Naive thymus-derived CD4-positive, alpha-beta T cell (primary cell): ENCODE measurements at regions of chr12 and their contacts with region 1.

Region 1: DNA sequence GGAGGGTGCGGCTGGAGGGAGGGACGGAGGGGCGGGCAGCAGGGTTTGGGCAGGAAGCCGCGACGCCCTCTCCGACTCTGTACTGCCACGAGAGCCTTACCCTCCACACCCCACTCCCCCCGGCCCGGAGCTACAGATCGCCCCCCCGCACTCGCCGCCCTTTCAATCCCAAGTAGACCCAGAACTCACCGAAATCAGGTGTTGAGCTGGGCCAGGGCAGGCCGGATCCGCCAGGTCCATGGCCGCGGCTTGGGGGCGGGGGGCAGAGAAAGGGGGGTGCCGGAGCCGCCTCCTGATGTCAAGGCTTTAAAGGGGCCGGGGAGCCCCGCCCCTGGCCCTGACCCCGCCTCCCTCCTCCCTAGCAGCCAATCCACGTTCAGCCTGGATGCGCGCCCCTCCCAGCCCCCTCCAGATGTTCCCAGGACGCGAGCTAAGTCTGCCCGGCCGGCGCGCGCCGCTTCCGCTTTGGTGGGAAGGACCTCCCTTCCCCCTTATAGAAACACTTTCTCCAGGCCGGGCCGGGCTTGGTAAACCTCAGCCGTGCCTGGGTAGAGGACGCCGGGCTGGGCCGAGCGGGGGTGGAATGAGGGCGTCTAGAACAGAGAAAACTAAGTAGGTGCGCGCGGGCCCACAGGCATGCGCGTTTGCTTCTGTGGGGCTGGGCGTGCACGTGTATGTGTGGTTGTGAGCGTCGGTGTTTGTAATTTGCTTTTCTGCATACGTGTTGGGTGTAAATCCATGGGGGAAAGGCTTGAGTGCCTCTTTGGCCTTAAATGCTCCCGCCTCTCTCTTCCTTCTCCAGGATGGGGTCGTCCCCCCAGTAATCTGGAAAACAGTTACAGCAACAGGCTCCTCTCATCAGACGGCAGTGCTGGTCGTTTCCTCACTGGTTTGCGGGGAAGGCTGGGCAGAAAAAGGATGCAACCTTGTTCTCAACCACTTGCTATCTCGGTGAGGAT is at the start of gene NCKAP5L:
- DNase-seq: peak; percentile 86 to 94 (median 93)
- ATAC-seq: peak; percentile 96
- H3K4me3 ChIP-seq: peak within 1 kb of the TSS; percentile 82
- H3K4me3 Mint-ChIP-seq: peak within 1 kb of the TSS; percentile 88 to 99 (median 96)
- H3K27ac ChIP-seq: peak within 1 kb of the TSS; percentile 79
- H3K27ac Mint-ChIP-seq: peak within 1 kb of the TSS; percentile 89 to 99 (median 95)
- H3K4me1 ChIP-seq: peaks cover 8 to 16% of the 10 kb centered on the region in 2 donors
- H3K4me1 Mint-ChIP-seq: peaks cover 7 to 42% (median 30%) of the 10 kb centered on the region in 7 donors
- H3K27me3 ChIP-seq: no peaks in the 10 kb centered on the region
- H3K27me3 Mint-ChIP-seq: peaks cover 0 to 13% (median 0%) of the 10 kb centered on the region in 5 donors
- total RNA-seq, gene NCKAP5L: 4.3 to 27.5 (median 12.0) TPM

Region 2: GRCh38 chr12:49264738-49265515 is 563.5 kb before region 1 on chr12 and contains the start of gene TUBA1C:
- CTCF ChIA-PET with region 1: no interaction called
- POLR2A ChIA-PET with region 1: no interaction called
- intact Hi-C with region 1: loop called in 1 of 2 experiments (anchors 10 kb)
- DNase-seq: peak; percentile 67 to 98 (median 72)
- ATAC-seq: peak; percentile 93
- H3K4me3 ChIP-seq: peak within 1 kb of the TSS; percentile 91
- H3K4me3 Mint-ChIP-seq: peak within 1 kb of the TSS; percentile 88 to 99 (median 92)
- H3K27ac ChIP-seq: peak within 1 kb of the TSS; percentile 68
- H3K27ac Mint-ChIP-seq: peak within 1 kb of the TSS; percentile 65 to 99 (median 89)
- H3K4me1 ChIP-seq: peaks cover 16% of the 10 kb centered on the region in 2 donors
- H3K4me1 Mint-ChIP-seq: peaks cover 4 to 51% (median 11%) of the 10 kb centered on the region in 7 donors
- H3K27me3 ChIP-seq: no peaks in the 10 kb centered on the region
- H3K27me3 Mint-ChIP-seq: peaks cover 0 to 2% (median 0%) of the 10 kb centered on the region in 5 donors
- total RNA-seq, gene TUBA1C: 17.9 to 195 (median 24.1) TPM

Region 3: DNA sequence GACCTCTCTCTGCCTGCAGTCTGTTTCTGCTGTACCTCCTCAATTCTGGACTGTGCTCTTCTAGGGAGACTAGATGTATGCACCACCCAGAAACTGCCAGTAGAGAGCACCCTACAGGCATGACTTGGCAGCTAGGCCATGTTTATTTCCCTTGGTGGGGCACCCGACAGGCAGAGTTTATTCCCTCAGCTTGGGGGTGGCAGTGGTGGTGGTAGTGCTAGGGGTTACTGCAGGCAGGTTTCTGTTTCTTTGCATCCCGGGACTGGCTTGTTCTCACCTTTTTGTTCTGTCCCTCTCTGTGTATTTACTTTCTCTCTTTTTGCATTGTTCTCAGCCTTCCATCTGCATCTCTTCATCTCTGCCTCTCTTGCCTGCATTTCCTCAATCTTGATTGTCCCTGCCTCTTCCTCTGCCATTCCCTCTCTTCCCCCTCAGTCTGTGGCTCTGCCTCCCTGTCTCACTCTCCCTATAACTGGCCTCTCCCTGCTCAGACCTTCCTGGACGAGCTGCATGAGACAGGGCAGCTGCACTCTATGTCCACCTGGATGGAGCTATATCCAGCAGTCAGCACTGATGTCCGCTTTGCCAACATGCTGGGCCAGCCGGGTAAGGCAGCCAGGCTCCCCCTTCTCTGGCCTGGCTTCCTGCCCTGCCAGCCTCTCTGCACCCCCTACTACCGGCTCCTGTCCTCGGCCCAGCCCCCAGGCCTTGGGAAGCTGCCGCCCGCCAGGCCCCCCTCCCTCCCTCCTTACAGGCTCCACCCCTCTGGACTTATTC is 191.2 kb before region 1 on chr12:
- CTCF ChIA-PET with region 1: no interaction called
- POLR2A ChIA-PET with region 1: no interaction called
- intact Hi-C with region 1: loop called in 1 of 2 experiments (anchors 5 kb)
- DNase-seq: peak in 8 of 9 donors; percentile 45 to 71 (median 61)
- ATAC-seq: peak; percentile 95
- H3K4me3 ChIP-seq: no peak overlapping the region
- H3K4me3 Mint-ChIP-seq: peak overlapping the region in 1 of 10 donors; percentile 20
- H3K27ac ChIP-seq: peak overlapping the region; percentile 38
- H3K27ac Mint-ChIP-seq: peak overlapping the region; percentile 13 to 90 (median 68)
- H3K4me1 ChIP-seq: peaks cover 6 to 11% of the 10 kb centered on the region in 2 donors
- H3K4me1 Mint-ChIP-seq: peaks cover 10 to 36% (median 26%) of the 10 kb centered on the region in 7 donors
- H3K27me3 ChIP-seq: no peaks in the 10 kb centered on the region
- H3K27me3 Mint-ChIP-seq: no peaks in the 10 kb centered on the region

Region 4: DNA sequence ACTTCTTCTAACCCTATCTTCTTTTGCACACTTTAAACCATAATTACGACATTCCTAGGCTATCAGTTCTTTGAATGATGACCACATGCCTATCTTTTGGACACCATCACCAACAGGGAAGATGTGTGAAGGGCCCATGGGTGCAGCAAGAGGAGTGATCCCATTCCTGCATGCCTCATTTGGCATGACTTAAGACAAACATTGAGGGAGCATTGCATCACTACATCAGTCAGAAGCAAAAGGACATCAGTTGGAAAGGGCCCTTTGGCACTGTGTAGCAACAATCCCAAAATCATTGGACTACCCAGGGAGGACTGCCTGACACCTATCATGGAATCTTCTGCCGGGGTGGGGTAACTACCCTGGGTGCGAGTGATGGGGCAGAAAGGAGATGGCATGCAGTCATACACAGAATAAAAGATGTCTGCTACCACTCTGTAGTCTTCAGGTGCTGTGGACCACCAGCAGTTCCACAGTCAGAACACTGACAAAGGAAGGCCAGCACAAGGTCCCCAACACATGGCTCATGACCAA is 97.8 kb before region 1 on chr12:
- CTCF ChIA-PET with region 1: no interaction called
- POLR2A ChIA-PET with region 1: no interaction called
- intact Hi-C with region 1: no loop called
- DNase-seq: no peak
- ATAC-seq: no peak
- H3K4me3 ChIP-seq: no peak overlapping the region
- H3K4me3 Mint-ChIP-seq: no peak overlapping the region
- H3K27ac ChIP-seq: no peak overlapping the region
- H3K27ac Mint-ChIP-seq: no peak overlapping the region
- H3K4me1 ChIP-seq: no peaks in the 10 kb centered on the region
- H3K4me1 Mint-ChIP-seq: peaks cover 0 to 2% (median 0%) of the 10 kb centered on the region in 7 donors
- H3K27me3 ChIP-seq: no peaks in the 10 kb centered on the region
- H3K27me3 Mint-ChIP-seq: peaks cover 0 to 26% (median 3%) of the 10 kb centered on the region in 5 donors

Region 5: GRCh38 chr12:49750027-49750995 is 78.1 kb before region 1 on chr12:
- CTCF ChIA-PET with region 1: no interaction called
- POLR2A ChIA-PET with region 1: interaction called, 4 read pairs
- intact Hi-C with region 1: loop called in 1 of 2 experiments (anchors 2 kb)
- DNase-seq: peak in 5 of 9 donors; percentile 10 to 59 (median 36)
- ATAC-seq: peak; percentile 76
- H3K4me3 ChIP-seq: peak overlapping the region; percentile 2
- H3K4me3 Mint-ChIP-seq: peak overlapping the region; percentile 39 to 95 (median 66)
- H3K27ac ChIP-seq: peak overlapping the region; percentile 46
- H3K27ac Mint-ChIP-seq: peak overlapping the region; percentile 26 to 89 (median 76)
- H3K4me1 ChIP-seq: peaks cover 50 to 56% of the 10 kb centered on the region in 2 donors
- H3K4me1 Mint-ChIP-seq: peaks cover 43 to 89% (median 77%) of the 10 kb centered on the region in 7 donors
- H3K27me3 ChIP-seq: no peaks in the 10 kb centered on the region
- H3K27me3 Mint-ChIP-seq: no peaks in the 10 kb centered on the region

Region 6: GRCh38 chr12:50041062-50041860 is 212.8 kb after region 1 on chr12:
- CTCF ChIA-PET with region 1: no interaction called
- POLR2A ChIA-PET with region 1: no interaction called
- intact Hi-C with region 1: no loop called
- DNase-seq: no peak
- ATAC-seq: no peak
- H3K4me3 ChIP-seq: no peak overlapping the region
- H3K4me3 Mint-ChIP-seq: no peak overlapping the region
- H3K27ac ChIP-seq: no peak overlapping the region
- H3K27ac Mint-ChIP-seq: peak overlapping the region in 1 of 9 donors; percentile 6
- H3K4me1 ChIP-seq: no peaks in the 10 kb centered on the region
- H3K4me1 Mint-ChIP-seq: peaks cover 0 to 15% (median 0%) of the 10 kb centered on the region in 7 donors
- H3K27me3 ChIP-seq: no peaks in the 10 kb centered on the region
- H3K27me3 Mint-ChIP-seq: peaks cover 0 to 10% (median 4%) of the 10 kb centered on the region in 5 donors

Region 7: DNA sequence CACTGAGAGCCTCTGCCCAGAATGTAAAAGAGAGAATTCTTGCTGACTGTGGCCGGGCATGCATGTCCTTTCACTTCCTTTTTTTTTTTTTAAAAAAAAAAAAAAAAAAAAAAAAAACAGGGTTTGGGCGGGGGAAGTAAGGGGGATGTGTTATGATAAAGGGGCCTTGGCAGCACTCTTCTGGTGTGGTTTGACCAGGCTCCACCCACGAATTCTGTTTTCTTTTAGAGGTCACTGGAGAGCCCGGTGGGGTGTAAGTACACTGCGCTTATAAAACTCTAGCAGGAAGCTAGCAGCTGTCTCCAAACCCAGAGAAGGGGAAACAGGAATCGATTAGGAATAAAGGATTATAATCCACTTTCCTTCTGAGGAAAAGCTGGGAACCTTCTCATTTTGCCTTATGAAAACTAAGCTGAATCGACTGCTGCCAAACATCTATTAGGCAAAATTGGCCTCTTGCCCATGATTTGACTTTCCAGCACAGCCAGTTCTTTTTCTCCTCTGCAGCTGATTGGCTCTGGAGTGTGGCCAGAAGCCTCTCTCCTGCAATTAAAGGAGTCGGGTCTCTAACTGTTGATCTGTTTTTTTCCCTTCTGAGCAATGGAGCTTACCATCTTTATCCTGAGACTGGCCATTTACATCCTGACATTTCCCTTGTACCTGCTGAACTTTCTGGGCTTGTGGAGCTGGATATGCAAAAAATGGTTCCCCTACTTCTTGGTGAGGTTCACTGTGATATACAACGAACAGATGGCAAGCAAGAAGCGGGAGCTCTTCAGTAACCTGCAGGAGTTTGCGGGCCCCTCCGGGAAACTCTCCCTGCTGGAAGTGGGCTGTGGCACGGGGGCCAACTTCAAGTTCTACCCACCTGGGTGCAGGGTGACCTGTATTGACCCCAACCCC is 1096.3 kb after region 1 on chr12:
- CTCF ChIA-PET with region 1: no interaction called
- POLR2A ChIA-PET with region 1: no interaction called
- intact Hi-C with region 1: no loop called
- DNase-seq: peak in 4 of 9 donors; percentile 1 to 9 (median 4)
- ATAC-seq: peak; percentile 85
- H3K4me3 ChIP-seq: no peak overlapping the region
- H3K4me3 Mint-ChIP-seq: peak overlapping the region; percentile 53 to 84 (median 74)
- H3K27ac ChIP-seq: no peak overlapping the region
- H3K27ac Mint-ChIP-seq: peak overlapping the region in 5 of 9 donors; percentile 1 to 93 (median 56)
- H3K4me1 ChIP-seq: peaks cover 0 to 9% of the 10 kb centered on the region in 2 donors
- H3K4me1 Mint-ChIP-seq: peaks cover 8 to 40% (median 24%) of the 10 kb centered on the region in 7 donors
- H3K27me3 ChIP-seq: no peaks in the 10 kb centered on the region
- H3K27me3 Mint-ChIP-seq: peaks cover 0 to 3% (median 0%) of the 10 kb centered on the region in 5 donors